MCF 10A (cell line): ENCODE measurements at regions of chr1 and their contacts with region 1.

Region 1: DNA sequence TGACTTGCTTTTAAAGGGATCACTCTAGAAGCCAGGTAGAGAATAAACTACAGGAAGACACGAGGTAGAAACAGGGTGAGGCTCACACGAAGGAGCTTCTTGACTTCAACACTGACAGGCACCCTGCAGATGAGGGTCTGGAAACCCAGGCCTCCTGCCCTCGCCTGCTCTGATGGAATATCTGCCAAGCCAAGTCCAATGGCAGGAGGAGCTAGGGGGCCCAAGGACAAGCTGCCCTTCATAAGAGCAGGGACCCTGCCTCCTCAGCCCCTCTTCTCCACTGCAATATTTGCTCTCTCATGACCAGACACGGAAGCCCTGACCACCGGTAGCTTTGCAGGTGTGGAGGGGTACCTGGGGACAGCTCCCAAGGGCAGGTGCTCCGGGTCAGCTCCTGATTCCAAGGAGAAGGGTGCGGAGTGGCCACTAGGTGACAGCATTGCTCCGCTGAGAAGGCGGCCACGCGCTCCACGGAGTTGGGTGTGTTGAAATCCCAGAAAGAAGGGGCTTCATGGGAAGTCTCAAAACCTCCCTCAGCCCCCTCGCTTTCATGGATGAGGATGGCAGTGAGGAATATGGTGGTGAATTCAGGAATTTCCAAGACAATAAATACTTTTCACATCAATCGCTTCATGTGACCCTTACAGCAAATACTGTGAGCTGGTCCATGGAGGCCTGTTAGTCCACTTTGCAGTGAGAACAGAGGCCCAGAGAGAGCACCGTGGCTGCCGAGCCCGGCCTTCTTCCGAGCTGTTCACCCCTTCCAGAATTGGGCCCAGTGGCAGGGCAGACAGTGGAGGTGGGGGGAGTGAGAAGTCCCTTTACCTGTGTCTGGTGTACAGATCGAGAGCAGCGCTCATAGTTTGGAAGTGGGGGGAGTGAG is 33.2 kb upstream of the PAX7 start:
- DNase-seq: peak; percentile 53
- H3K4me3 Mint-ChIP-seq: no peak overlapping the region
- H3K27ac Mint-ChIP-seq: no peak overlapping the region
- H3K4me1 Mint-ChIP-seq: no peaks in the 10 kb centered on the region
- H3K27me3 Mint-ChIP-seq: peaks cover 22% of the 10 kb centered on the region
- CTCF ChIP-seq: peak; percentile 96

Region 2: GRCh38 chr1:17742583-17742982 is 854.8 kb before region 1 on chr1:
- CTCF ChIA-PET with region 1: no interaction called
- POLR2A ChIA-PET with region 1: no interaction called
- intact Hi-C with region 1: no loop called
- DNase-seq: peak; percentile 24
- H3K4me3 Mint-ChIP-seq: no peak overlapping the region
- H3K27ac Mint-ChIP-seq: no peak overlapping the region
- H3K4me1 Mint-ChIP-seq: no peaks in the 10 kb centered on the region
- H3K27me3 Mint-ChIP-seq: peaks cover 20% of the 10 kb centered on the region
- CTCF ChIP-seq: no peak

Region 3: DNA sequence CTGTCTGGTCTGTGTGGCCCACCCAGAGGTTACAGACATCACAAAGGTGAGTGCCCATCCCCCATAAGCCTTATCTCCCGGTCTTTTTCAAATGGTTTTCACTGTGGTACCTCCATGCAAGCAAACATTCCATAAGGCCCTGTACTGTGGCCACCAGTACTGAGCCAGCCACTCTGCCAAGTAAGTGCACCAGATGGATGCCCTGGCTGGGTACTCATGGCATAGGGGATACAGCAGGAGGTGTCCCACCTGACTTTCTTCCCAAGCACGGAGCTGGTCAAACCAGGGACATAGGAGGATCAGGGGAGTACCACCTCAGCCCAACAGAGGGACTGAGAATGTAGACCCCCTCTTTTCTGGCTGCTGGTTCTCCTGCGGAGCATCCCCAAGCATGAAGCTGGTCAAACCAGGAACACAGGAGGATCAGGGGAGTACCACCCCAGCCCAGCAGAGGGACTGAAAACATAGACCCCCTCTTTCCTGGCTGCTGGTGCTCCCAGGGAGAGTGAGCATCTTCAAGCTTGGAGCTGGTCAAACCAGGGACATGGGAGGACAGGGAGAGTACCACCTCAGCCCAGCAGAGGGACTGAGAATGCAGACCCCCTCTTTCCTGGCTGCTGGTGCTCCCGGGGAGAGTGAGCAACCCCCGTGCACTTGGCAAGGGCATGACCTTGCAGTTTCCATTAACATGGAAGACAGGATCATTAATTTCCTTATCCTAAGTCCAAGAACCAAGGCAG is 198.4 kb before region 1 on chr1:
- CTCF ChIA-PET with region 1: no interaction called
- POLR2A ChIA-PET with region 1: no interaction called
- intact Hi-C with region 1: no loop called
- DNase-seq: no peak
- H3K4me3 Mint-ChIP-seq: no peak overlapping the region
- H3K27ac Mint-ChIP-seq: no peak overlapping the region
- H3K4me1 Mint-ChIP-seq: no peaks in the 10 kb centered on the region
- H3K27me3 Mint-ChIP-seq: no peaks in the 10 kb centered on the region
- CTCF ChIP-seq: no peak

Region 4: DNA sequence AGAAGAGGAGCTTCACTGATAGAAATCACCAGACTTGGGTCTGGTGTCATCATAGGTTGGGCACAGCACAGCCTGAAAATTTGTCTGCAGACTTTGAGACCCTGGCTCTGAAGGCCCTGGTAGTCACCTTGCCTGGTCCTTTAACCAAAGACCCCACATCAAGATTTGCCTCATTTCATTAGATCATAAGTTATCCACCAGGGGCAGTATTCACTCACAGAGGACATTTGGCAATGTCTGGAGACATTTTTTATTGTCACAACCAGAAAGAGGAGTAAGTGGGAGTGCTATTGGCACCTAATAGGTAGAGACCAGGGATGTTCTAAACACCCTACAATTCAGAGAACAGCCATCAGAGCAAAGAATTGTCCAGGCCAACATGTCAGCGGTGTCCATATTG is 11.1 kb after region 1 on chr1:
- CTCF ChIA-PET with region 1: interaction called, 13 read pairs
- POLR2A ChIA-PET with region 1: interaction called, 4 read pairs
- intact Hi-C with region 1: no loop called
- DNase-seq: peak; percentile 15
- H3K4me3 Mint-ChIP-seq: no peak overlapping the region
- H3K27ac Mint-ChIP-seq: no peak overlapping the region
- H3K4me1 Mint-ChIP-seq: no peaks in the 10 kb centered on the region
- H3K27me3 Mint-ChIP-seq: no peaks in the 10 kb centered on the region
- CTCF ChIP-seq: no peak

Region 5: DNA sequence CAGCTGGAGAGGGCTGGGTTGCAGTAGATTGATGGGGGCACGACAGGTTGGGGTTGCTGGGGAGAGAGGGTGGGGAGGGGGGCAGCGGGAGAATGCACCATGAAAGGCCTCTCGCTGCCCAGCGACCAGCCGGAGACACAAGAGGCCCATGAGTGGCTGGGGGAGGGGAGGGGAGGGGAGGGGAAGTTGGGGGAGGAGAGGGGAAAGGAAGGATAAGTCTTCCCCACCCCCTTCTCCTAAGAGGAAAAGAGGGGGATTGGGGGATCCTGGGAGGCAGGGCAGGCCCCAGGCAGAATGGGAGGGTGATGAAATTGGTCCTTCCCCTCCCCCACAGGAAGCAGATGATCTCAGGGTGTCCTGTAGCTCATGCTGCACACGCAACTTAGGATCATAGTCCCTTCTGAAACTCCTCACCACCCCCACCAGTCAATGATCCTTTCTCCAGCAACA is 79.0 kb after region 1 on chr1:
- CTCF ChIA-PET with region 1: interaction called, 122 read pairs
- POLR2A ChIA-PET with region 1: no interaction called
- intact Hi-C with region 1: loop called (anchors 1 kb)
- DNase-seq: peak; percentile 9
- H3K4me3 Mint-ChIP-seq: no peak overlapping the region
- H3K27ac Mint-ChIP-seq: no peak overlapping the region
- H3K4me1 Mint-ChIP-seq: peaks cover 4% of the 10 kb centered on the region
- H3K27me3 Mint-ChIP-seq: no peaks in the 10 kb centered on the region
- CTCF ChIP-seq: no peak

Region 6: DNA sequence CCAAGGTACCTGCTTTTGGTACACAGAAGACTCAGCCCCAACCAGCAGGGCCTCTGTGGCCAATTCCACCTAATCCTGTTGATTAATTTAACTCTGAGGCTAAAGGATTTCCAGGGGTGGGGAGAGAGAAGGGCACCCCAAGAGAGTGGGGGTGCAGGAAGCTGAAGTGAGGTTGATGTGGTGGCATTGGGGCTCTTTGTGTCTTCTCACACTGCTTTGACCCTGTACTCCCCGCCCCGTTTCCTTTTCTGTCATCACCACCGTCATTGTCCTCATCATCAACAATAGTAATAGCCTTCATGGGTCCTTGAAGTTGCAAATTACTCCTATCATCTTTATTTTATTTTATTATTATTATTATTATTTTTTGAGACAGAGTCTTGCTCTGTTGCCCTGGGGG is 89.1 kb after region 1 on chr1:
- CTCF ChIA-PET with region 1: interaction called, 122 read pairs
- POLR2A ChIA-PET with region 1: no interaction called
- intact Hi-C with region 1: loop called (anchors 1 kb)
- DNase-seq: no peak
- H3K4me3 Mint-ChIP-seq: no peak overlapping the region
- H3K27ac Mint-ChIP-seq: no peak overlapping the region
- H3K4me1 Mint-ChIP-seq: no peaks in the 10 kb centered on the region
- H3K27me3 Mint-ChIP-seq: peaks cover 1% of the 10 kb centered on the region
- CTCF ChIP-seq: no peak

Region 7: GRCh38 chr1:18820791-18821641 is 223.6 kb after region 1 on chr1:
- CTCF ChIA-PET with region 1: interaction called, 109 read pairs
- POLR2A ChIA-PET with region 1: no interaction called
- intact Hi-C with region 1: loop called (anchors 1 kb)
- DNase-seq: peak; percentile 70
- H3K4me3 Mint-ChIP-seq: no peak overlapping the region
- H3K27ac Mint-ChIP-seq: no peak overlapping the region
- H3K4me1 Mint-ChIP-seq: peaks cover 7% of the 10 kb centered on the region
- H3K27me3 Mint-ChIP-seq: peaks cover 39% of the 10 kb centered on the region
- CTCF ChIP-seq: peak; percentile 91

Region 8: GRCh38 chr1:19096036-19096833 is 498.8 kb after region 1 on chr1:
- CTCF ChIA-PET with region 1: interaction called, 4 read pairs
- POLR2A ChIA-PET with region 1: no interaction called
- intact Hi-C with region 1: loop called (anchors 5 kb)
- DNase-seq: peak; percentile 55
- H3K4me3 Mint-ChIP-seq: no peak overlapping the region
- H3K27ac Mint-ChIP-seq: no peak overlapping the region
- H3K4me1 Mint-ChIP-seq: no peaks in the 10 kb centered on the region
- H3K27me3 Mint-ChIP-seq: no peaks in the 10 kb centered on the region
- CTCF ChIP-seq: peak; percentile 57